Activated CD8-positive, alpha-beta memory T cell treated with anti-CD3 and anti-CD28 coated beads, Interleukin-2, amount 10 ng/mL, durations not matched to agents 7 days and 5 days (primary cell): ENCODE measurements at regions of chr3 and their contacts with region 1.

Region 1: GRCh38 chr3:150787741-150788370 is 24.9 kb upstream of the SIAH2 start:
- DNase-seq: peak; percentile 88
- ATAC-seq: peak; percentile 70
- H3K4me3 Mint-ChIP-seq: no peak overlapping the region
- H3K27ac Mint-ChIP-seq: no peak overlapping the region
- H3K4me1 Mint-ChIP-seq: peaks cover 42% of the 10 kb centered on the region
- H3K27me3 Mint-ChIP-seq: no peaks in the 10 kb centered on the region

Region 2: GRCh38 chr3:150721285-150722130 is 66.3 kb before region 1 on chr3:
- CTCF ChIA-PET with region 1: interaction called, 15 read pairs
- DNase-seq: no peak
- ATAC-seq: peak; percentile 77
- H3K4me3 Mint-ChIP-seq: no peak overlapping the region
- H3K27ac Mint-ChIP-seq: no peak overlapping the region
- H3K4me1 Mint-ChIP-seq: peaks cover 17% of the 10 kb centered on the region
- H3K27me3 Mint-ChIP-seq: no peaks in the 10 kb centered on the region

Region 3: GRCh38 chr3:150775091-150775501 is 12.8 kb before region 1 on chr3:
- CTCF ChIA-PET with region 1: interaction called, 10 read pairs
- DNase-seq: no peak
- ATAC-seq: no peak
- H3K4me3 Mint-ChIP-seq: no peak overlapping the region
- H3K27ac Mint-ChIP-seq: no peak overlapping the region
- H3K4me1 Mint-ChIP-seq: no peaks in the 10 kb centered on the region
- H3K27me3 Mint-ChIP-seq: no peaks in the 10 kb centered on the region

Region 4: DNA sequence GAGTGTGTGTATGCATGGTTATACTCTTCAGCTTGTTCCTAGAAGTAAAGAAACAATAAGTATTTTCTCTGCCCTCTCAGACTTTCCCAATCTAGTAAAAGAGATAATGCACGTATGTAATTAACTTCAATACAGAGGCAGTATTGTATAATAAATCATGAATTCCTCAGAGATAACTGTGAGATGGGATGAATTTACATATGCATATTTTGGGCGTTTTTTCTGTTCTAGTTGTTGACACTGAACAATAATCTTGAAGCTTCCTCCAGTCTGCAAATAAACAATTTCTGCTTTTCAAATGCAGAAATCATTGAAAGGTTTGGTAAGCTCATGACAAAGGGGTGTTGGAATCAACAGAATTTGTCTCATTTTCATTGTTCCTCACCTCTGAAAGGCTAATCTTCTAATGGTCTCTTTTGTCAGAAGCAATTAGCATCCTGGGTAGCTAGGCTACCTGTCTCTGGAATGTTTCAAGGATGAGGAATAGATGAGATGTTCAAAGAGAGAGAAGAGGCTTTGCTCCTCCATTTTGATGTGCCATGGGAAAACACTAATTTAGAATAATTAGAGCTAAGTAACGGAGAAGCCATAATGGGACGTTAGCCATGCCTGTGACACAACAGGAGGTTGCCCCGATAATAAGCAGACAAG is 18.5 kb after region 1 on chr3:
- CTCF ChIA-PET with region 1: interaction called, 14 read pairs
- DNase-seq: no peak
- ATAC-seq: no peak
- H3K4me3 Mint-ChIP-seq: no peak overlapping the region
- H3K27ac Mint-ChIP-seq: no peak overlapping the region
- H3K4me1 Mint-ChIP-seq: no peaks in the 10 kb centered on the region
- H3K27me3 Mint-ChIP-seq: peaks cover 31% of the 10 kb centered on the region

Region 5: DNA sequence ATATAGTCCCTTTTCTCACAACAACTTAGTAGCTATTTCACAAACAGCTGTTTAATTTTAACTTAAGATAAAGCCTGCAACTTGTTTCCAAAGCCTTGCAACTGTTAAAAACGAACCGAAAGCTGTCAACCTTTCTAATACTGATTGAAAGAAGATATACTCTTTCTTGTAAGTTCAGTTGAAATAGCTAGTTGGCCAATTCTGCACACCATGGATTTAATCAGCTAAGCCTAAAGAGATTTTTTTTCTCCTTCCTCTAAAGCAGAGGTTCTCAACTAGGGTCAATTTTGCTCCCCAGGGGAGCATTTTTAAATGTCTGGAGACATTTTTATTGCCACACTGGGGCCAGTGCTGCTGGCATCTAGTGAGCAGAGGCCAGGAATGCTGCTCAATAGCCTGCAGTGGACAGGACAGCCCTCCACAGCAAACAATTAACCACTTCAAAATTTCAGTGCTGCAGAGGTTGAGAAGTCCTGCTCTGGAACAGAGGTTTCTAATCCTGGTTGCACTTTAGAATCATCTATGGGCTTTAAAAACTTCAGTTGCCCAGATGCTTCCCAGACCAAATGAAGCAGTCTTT is 91.2 kb after region 1 on chr3:
- CTCF ChIA-PET with region 1: interaction called, 10 read pairs
- DNase-seq: no peak
- ATAC-seq: no peak
- H3K4me3 Mint-ChIP-seq: no peak overlapping the region
- H3K27ac Mint-ChIP-seq: no peak overlapping the region
- H3K4me1 Mint-ChIP-seq: peaks cover 22% of the 10 kb centered on the region
- H3K27me3 Mint-ChIP-seq: peaks cover 16% of the 10 kb centered on the region